Activated naive CD4-positive, alpha-beta T cell treated with anti-CD3 and anti-CD28 coated beads for 36 hours (primary cell): ENCODE measurements at regions of chr9 and their contacts with region 1.

Region 1: GRCh38 chr9:95726756-95727155 is 148.7 kb upstream of the ERCC6L2 start:
- DNase-seq: no peak
- H3K4me3 Mint-ChIP-seq: no peak overlapping the region
- H3K27ac Mint-ChIP-seq: no peak overlapping the region
- H3K4me1 Mint-ChIP-seq: peaks cover 34% of the 10 kb centered on the region
- H3K27me3 Mint-ChIP-seq: peaks cover 3% of the 10 kb centered on the region

Region 2: GRCh38 chr9:95626885-95627558 is 99.7 kb before region 1 on chr9:
- CTCF ChIA-PET with region 1: no interaction called
- intact Hi-C with region 1: loop called (anchors 1 kb)
- DNase-seq: peak; percentile 91
- H3K4me3 Mint-ChIP-seq: no peak overlapping the region
- H3K27ac Mint-ChIP-seq: peak overlapping the region; percentile 97
- H3K4me1 Mint-ChIP-seq: peaks cover 31% of the 10 kb centered on the region
- H3K27me3 Mint-ChIP-seq: no peaks in the 10 kb centered on the region

Region 3: DNA sequence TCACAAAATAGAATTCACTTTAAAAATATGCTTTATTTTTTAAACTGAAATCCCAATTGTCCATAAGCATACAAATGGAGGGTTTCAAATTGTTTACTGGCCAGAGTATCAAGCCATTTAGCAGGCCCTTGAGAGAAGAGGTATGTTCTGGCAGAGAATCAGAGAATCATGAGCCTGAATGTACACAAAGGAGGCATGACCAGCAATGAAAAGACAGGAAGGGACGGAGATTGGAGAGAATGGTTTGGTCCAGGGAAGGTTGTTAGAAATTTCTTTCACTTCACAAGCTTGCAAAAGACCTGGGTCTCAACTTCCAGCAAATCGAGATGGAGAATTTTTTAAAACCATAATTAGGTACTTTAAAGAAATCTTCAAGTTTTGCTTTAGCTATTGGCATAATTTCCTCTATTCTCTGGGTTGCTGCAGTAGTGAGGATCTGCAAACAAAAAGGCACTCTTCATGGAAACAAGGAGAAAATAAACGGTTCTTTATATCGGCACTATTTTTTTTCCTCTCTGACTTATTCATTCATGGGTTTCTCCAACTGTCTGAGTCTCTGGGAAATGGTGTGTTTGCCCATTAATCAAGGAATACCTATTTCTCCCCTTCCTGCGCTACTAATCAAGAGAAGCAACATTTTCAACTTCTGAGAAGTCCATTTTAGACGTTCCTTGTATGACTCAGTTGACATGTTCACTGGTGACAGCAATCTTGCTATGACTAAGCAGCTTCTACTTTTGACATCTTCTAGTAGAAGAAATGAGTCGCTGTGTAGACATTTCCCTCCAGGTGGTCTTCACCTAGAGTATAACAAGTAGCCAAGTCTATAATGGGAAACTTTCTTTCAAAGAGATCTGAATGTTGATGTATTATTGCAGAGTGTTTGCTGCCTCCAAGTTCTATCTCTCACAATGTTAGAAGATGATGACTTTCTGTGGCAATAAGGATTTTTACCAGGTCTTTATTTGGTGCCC is 125.6 kb after region 1 on chr9:
- CTCF ChIA-PET with region 1: no interaction called
- intact Hi-C with region 1: loop called (anchors 1 kb)
- DNase-seq: peak; percentile 37
- H3K4me3 Mint-ChIP-seq: no peak overlapping the region
- H3K27ac Mint-ChIP-seq: no peak overlapping the region
- H3K4me1 Mint-ChIP-seq: peaks cover 22% of the 10 kb centered on the region
- H3K27me3 Mint-ChIP-seq: no peaks in the 10 kb centered on the region

Region 4: DNA sequence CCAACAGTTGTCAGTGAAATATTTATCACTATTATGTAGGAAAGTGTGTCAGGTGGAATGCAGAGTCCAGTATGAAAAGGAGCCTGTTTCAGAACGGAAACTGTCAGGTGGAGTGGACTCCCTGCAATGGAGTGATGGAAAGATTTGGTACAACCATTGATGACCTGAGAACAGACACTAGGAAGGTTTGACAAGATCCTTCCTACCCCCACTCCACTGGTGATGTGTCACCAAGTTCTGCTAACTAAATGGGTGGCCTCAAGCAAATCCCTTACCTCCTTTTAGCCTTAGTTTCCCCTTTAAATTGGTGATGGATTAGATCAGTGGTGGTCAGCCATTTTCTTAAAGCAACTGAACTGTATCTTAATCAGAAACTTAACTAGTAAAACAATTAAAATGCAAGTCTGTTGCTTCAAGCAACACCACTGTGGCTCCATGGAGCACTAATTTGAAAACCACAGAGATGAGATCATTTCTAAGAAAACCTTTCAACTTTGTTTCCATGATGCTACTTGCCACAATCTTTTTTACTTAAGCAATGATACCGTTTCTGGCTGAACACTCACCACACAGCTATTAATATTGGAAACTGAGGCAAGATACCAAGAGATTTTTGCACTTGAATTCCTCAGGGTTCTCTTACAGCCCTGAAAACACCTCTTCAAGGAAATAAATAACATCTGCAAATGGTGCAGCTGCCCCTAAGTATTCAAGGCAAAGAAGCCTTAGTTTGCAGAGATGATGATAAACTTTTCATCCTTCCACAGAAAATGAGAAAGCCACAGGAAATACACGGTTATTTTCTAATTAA is 289.3 kb after region 1 on chr9:
- CTCF ChIA-PET with region 1: no interaction called
- intact Hi-C with region 1: loop called (anchors 2 kb)
- DNase-seq: peak; percentile 62
- H3K4me3 Mint-ChIP-seq: peak overlapping the region; percentile 32
- H3K27ac Mint-ChIP-seq: peak overlapping the region; percentile 99
- H3K4me1 Mint-ChIP-seq: peaks cover 64% of the 10 kb centered on the region
- H3K27me3 Mint-ChIP-seq: no peaks in the 10 kb centered on the region

Region 5: GRCh38 chr9:96217754-96218693 is 491.3 kb after region 1 on chr9:
- CTCF ChIA-PET with region 1: interaction called, 4 read pairs
- intact Hi-C with region 1: loop called (anchors 2 kb)
- DNase-seq: peak; percentile 73
- H3K4me3 Mint-ChIP-seq: peak overlapping the region; percentile 57
- H3K27ac Mint-ChIP-seq: no peak overlapping the region
- H3K4me1 Mint-ChIP-seq: peaks cover 7% of the 10 kb centered on the region
- H3K27me3 Mint-ChIP-seq: peaks cover 49% of the 10 kb centered on the region

Region 6: GRCh38 chr9:96478829-96479371 is 752.1 kb after region 1 on chr9:
- CTCF ChIA-PET with region 1: no interaction called
- intact Hi-C with region 1: loop called (anchors 2 kb)
- DNase-seq: peak; percentile 60
- H3K4me3 Mint-ChIP-seq: no peak overlapping the region
- H3K27ac Mint-ChIP-seq: peak overlapping the region; percentile 88
- H3K4me1 Mint-ChIP-seq: peaks cover 33% of the 10 kb centered on the region
- H3K27me3 Mint-ChIP-seq: no peaks in the 10 kb centered on the region